ENCODE measurements at regions of chr4 and their contacts with region 1.

Region 1: GRCh38 chr4:83455281-83456129 is at the starts of genes HELQ and MRPS18C:
- H3K4me3 Mint-ChIP-seq: peak within 1 kb of the TSS; percentile 92
- H3K27ac Mint-ChIP-seq: peak within 1 kb of the TSS; percentile 98
- H3K4me1 Mint-ChIP-seq: peaks cover 25% of the 10 kb centered on the region
- H3K27me3 Mint-ChIP-seq: no peaks in the 10 kb centered on the region

Region 2: DNA sequence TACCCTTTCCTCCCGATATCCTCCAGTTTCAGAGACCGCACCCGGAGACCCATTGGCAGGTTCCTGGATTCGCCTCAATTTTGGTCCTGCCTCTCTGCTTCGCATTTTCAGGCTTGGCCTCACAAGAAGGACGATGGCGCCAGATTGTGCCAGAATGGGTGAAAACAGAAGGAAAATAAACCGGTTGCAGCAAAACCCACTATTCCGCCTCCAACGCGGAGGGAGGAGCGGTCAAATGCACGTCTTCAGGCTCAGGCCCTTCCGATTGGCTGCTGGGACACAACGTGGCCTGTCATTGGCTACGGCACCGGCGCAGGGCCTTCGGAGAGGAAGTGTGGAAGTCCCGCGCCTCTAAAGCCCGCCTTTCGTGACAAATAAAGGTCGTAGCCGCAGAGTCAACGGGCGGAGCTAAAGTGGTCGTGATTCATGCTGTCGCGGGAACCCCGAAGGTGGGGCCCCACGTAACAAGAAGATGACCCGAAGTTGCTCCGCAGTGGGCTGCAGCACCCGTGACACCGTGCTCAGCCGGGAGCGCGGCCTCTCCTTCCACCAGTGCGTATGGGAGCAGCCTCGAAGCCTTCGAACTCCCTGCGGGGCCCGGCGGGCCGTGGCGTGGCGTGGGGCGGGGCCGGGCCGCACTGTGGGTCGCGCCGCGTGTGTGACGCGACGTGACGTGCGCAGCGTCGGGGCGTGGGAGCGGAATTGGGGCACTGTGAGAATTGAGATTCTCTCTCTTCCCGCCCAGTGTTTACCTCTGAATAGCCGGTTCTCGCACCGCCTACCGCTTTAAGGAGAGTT is 555.0 kb before region 1 on chr4 and contains the start of gene THAP9:
- intact Hi-C with region 1: loop called (anchors 5 kb)
- H3K4me3 Mint-ChIP-seq: no peak within 1 kb of the TSS
- H3K27ac Mint-ChIP-seq: no peak within 1 kb of the TSS
- H3K4me1 Mint-ChIP-seq: peaks cover 11% of the 10 kb centered on the region
- H3K27me3 Mint-ChIP-seq: no peaks in the 10 kb centered on the region

Region 3: GRCh38 chr4:83284193-83285054 is 171.1 kb before region 1 on chr4 and contains the start of gene COQ2:
- intact Hi-C with region 1: loop called (anchors 10 kb)
- H3K4me3 Mint-ChIP-seq: peak within 1 kb of the TSS; percentile 92
- H3K27ac Mint-ChIP-seq: peak within 1 kb of the TSS; percentile 99
- H3K4me1 Mint-ChIP-seq: peaks cover 49% of the 10 kb centered on the region
- H3K27me3 Mint-ChIP-seq: no peaks in the 10 kb centered on the region

Region 4: GRCh38 chr4:83334425-83335241 is 120.9 kb before region 1 on chr4 and contains the start of gene HPSE:
- intact Hi-C with region 1: loop called (anchors 10 kb)
- H3K4me3 Mint-ChIP-seq: peak within 1 kb of the TSS; percentile 80
- H3K27ac Mint-ChIP-seq: peak within 1 kb of the TSS; percentile 67
- H3K4me1 Mint-ChIP-seq: peaks cover 46% of the 10 kb centered on the region
- H3K27me3 Mint-ChIP-seq: peaks cover 6% of the 10 kb centered on the region

Region 5: GRCh38 chr4:83369831-83370639 is 85.5 kb before region 1 on chr4:
- intact Hi-C with region 1: loop called (anchors 5 kb)
- H3K4me3 Mint-ChIP-seq: peak overlapping the region; percentile 20
- H3K27ac Mint-ChIP-seq: peak overlapping the region; percentile 48
- H3K4me1 Mint-ChIP-seq: peaks cover 45% of the 10 kb centered on the region
- H3K27me3 Mint-ChIP-seq: peaks cover 33% of the 10 kb centered on the region

Region 6: DNA sequence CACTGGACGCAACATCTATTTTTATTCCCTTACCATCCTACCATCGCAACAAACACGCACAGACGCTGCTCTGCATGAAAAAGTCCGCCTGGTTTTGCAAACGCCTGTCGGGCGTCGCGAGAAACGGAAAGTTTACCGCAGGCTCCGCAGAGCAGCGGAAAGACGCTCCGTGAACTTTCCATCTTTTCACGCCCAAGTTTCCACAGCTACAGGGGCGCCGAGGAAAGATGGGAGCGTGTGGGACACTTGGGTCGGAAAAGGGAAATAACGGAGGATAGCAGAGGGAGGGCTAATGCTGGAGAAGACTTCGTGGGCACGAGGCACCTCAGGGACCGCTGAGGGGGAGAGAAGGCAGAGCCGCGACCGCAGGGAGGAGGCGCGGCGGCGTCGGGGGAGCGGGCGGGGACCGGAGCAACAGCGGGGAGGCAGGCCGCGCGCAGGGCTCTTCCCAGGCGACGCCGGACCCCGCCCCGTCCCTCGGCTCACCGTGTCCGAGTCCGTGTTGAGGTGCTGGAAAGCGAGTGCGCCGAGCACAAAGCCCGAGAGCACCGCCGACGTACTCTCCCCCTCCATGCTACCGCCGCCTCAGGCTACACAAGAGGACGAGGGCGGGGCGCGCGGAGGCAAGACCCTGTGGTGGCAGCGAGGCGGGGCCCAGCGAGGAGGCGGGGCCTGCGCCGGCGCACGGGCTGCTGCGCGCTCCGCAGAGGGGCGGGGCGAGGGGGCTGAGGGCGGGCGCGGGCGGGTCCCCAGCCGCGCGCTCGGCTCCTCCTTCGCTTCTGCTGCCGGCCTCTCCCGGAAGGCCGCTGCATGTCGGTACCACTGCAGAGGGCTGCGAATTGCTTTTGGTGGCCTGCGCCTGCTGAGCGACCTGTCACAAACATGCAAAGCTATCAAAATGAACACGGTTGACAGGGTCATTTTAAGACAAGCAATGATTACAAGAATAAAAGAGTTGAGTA is 29.3 kb after region 1 on chr4 and contains the start of gene ABRAXAS1:
- intact Hi-C with region 1: loop called (anchors 2 kb)
- H3K4me3 Mint-ChIP-seq: peak within 1 kb of the TSS; percentile 88
- H3K27ac Mint-ChIP-seq: peak within 1 kb of the TSS; percentile 85
- H3K4me1 Mint-ChIP-seq: peaks cover 10% of the 10 kb centered on the region
- H3K27me3 Mint-ChIP-seq: no peaks in the 10 kb centered on the region